ENCODE measurements at regions of chr11 and their contacts with region 1.

Region 1: GRCh38 chr11:117226388-117227385 is 5.2 kb downstream of the PCSK7 start:
- DNase-seq: peak; percentile 43
- ATAC-seq: peak; percentile 93
- H3K4me3 ChIP-seq: no peak overlapping the region
- H3K27ac ChIP-seq: no peak overlapping the region
- H3K4me1 ChIP-seq: peaks cover 12% of the 10 kb centered on the region
- H3K27me3 ChIP-seq: no peaks in the 10 kb centered on the region
- CTCF ChIP-seq: peak; percentile 94

Region 2: DNA sequence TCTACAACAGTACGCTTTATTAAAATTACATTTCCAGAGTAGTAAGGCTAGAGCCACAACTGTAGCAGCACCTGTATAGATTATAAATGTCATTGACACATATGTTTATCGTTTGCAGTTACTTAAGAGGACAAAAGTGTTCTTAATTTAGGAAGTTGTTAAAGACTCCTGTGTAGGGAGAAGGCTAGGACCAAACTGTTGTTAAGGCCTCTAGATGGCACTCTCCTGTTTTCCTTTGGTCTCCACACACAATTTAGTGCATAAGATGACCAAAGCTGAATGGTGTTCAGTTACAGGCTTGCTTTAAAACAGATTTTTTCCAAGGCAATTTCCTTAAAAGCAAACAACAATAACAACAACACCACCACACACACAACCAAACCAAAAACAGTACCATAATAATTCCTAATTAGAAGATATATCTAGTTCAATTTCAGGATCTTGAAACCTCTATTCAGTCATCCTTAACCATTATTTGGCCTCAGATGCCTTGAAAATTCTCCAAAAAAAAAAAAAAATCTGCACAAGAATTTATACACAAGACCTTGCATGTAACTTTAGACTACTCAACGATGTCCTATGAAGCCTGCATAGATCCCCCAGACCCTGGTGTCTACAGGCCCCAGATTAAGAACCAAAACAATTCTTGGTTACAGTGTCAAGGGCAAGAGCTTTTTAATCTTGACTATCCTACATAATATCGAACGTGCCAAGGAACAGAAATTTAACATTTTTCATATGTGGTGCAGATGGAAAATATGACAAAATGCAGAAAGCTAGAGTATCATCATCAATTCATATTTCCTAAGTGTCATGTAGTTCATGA is 346.7 kb before region 1 on chr11:
- CTCF ChIA-PET with region 1: interaction called, 3 read pairs
- POLR2A ChIA-PET with region 1: no interaction called
- in situ Hi-C with region 1: no loop called
- intact Hi-C with region 1: loop called (anchors 10 kb)
- DNase-seq: peak; percentile 66
- ATAC-seq: peak; percentile 97
- H3K4me3 ChIP-seq: no peak overlapping the region
- H3K27ac ChIP-seq: no peak overlapping the region
- H3K4me1 ChIP-seq: no peaks in the 10 kb centered on the region
- H3K27me3 ChIP-seq: no peaks in the 10 kb centered on the region
- CTCF ChIP-seq: peak; percentile 79; the same call in 1 of the 2 replicates

Region 3: DNA sequence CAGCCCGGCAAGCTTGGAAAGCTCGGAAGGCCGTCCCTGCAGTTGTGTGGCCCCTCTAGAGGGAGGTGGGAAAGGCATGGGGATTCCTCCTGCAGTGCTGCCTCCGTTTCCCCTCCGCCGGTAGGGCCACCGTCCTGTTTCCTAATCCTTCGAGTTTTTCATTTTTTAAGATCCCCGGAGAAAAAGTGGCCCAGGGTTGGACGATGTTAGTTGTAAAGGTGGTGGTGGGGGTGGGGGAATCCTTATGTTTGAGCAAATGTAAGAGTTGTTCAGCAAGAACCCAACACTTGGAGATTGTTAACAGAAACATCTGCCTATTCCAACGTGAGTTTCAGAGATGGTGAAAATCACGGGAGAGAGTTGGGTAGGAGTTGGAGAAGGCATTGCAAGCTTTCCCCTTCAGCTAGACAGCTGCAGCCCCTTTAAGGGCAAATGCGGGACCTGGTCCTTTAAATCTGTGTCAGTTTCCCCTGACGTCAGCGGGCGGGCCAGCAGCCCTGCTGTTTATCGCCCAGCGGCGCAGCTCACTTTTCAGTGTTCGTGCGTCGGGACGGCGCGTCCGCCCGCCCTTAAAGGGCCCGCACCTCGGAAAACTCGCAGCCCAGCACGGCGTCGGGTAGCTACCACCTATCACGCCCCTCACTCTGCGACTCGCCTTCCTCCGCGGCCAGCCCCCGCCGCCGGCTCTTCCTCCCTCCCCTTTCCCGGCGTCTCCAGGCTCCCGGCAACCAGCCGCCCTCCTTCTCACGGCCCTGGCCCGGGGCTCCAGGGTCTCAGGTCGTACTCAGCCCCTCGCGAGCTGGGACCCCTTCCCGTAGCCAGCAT is 48.3 kb before region 1 on chr11 and contains the start of gene SIDT2:
- CTCF ChIA-PET with region 1: interaction called, 10 read pairs
- POLR2A ChIA-PET with region 1: no interaction called
- in situ Hi-C with region 1: no loop called
- intact Hi-C with region 1: loop called (anchors 10 kb)
- DNase-seq: peak; percentile 78
- ATAC-seq: peak; percentile 96
- H3K4me3 ChIP-seq: peak within 1 kb of the TSS; percentile 70 to 88
- H3K27ac ChIP-seq: peak within 1 kb of the TSS; percentile 87
- H3K4me1 ChIP-seq: peaks cover 21% of the 10 kb centered on the region
- H3K27me3 ChIP-seq: no peaks in the 10 kb centered on the region
- CTCF ChIP-seq: no peak
- total RNA-seq, gene SIDT2: 47.6 TPM

Measured in Panc1 (cell line).